Activated CD8-positive, alpha-beta T cell treated with anti-CD3 and anti-CD28 coated beads, Interleukin-2, amount 10 ng/mL, durations not matched to agents 7 days and 5 days (primary cell): ENCODE measurements at regions of chr3 and their contacts with region 1.

Region 1: GRCh38 chr3:181700168-181701087 is 11.3 kb upstream of the SOX2 start:
- DNase-seq: peak; percentile 74
- ATAC-seq: peak; percentile 79
- H3K4me3 Mint-ChIP-seq: peak overlapping the region; percentile 54
- H3K27ac Mint-ChIP-seq: no peak overlapping the region
- H3K4me1 Mint-ChIP-seq: peaks cover 26% of the 10 kb centered on the region
- H3K27me3 Mint-ChIP-seq: peaks cover 80% of the 10 kb centered on the region

Region 2: GRCh38 chr3:181326637-181327223 is 373.7 kb before region 1 on chr3:
- CTCF ChIA-PET with region 1: interaction called, 11 read pairs
- POLR2A ChIA-PET with region 1: no interaction called
- DNase-seq: peak; percentile 21
- ATAC-seq: no peak
- H3K4me3 Mint-ChIP-seq: no peak overlapping the region
- H3K27ac Mint-ChIP-seq: no peak overlapping the region
- H3K4me1 Mint-ChIP-seq: no peaks in the 10 kb centered on the region
- H3K27me3 Mint-ChIP-seq: no peaks in the 10 kb centered on the region

Region 3: GRCh38 chr3:181719991-181720680 is 19.7 kb after region 1 on chr3:
- CTCF ChIA-PET with region 1: interaction called, 13 read pairs
- POLR2A ChIA-PET with region 1: no interaction called
- DNase-seq: no peak
- ATAC-seq: no peak
- H3K4me3 Mint-ChIP-seq: no peak overlapping the region
- H3K27ac Mint-ChIP-seq: no peak overlapping the region
- H3K4me1 Mint-ChIP-seq: no peaks in the 10 kb centered on the region
- H3K27me3 Mint-ChIP-seq: peaks cover 82% of the 10 kb centered on the region

Region 4: DNA sequence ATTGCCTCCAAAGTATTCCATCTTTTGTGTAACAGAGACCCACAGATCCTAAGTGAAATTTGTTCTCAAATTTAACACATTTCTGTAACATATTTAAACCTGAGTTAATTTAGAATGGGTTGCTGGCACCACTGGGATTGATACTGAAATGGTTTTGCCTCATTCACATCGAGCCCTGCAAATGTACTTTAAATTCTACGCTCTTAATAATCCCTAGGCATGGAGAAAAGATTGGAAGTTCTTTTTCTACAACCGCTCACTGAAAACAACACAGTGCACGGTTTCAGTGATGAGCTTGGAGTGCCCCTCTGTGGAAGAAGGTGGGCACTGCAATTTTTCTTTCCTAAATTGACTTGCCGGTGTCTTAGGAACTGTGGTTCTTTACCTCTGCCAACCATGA is 983.0 kb after region 1 on chr3:
- CTCF ChIA-PET with region 1: interaction called, 24 read pairs
- POLR2A ChIA-PET with region 1: no interaction called
- DNase-seq: peak; percentile 73
- ATAC-seq: peak; percentile 71
- H3K4me3 Mint-ChIP-seq: peak overlapping the region; percentile 74
- H3K27ac Mint-ChIP-seq: no peak overlapping the region
- H3K4me1 Mint-ChIP-seq: peaks cover 12% of the 10 kb centered on the region
- H3K27me3 Mint-ChIP-seq: peaks cover 44% of the 10 kb centered on the region